Naive thymus-derived CD4-positive, alpha-beta T cell (primary cell): ENCODE measurements at regions of chr7 and their contacts with region 1.

Region 1: DNA sequence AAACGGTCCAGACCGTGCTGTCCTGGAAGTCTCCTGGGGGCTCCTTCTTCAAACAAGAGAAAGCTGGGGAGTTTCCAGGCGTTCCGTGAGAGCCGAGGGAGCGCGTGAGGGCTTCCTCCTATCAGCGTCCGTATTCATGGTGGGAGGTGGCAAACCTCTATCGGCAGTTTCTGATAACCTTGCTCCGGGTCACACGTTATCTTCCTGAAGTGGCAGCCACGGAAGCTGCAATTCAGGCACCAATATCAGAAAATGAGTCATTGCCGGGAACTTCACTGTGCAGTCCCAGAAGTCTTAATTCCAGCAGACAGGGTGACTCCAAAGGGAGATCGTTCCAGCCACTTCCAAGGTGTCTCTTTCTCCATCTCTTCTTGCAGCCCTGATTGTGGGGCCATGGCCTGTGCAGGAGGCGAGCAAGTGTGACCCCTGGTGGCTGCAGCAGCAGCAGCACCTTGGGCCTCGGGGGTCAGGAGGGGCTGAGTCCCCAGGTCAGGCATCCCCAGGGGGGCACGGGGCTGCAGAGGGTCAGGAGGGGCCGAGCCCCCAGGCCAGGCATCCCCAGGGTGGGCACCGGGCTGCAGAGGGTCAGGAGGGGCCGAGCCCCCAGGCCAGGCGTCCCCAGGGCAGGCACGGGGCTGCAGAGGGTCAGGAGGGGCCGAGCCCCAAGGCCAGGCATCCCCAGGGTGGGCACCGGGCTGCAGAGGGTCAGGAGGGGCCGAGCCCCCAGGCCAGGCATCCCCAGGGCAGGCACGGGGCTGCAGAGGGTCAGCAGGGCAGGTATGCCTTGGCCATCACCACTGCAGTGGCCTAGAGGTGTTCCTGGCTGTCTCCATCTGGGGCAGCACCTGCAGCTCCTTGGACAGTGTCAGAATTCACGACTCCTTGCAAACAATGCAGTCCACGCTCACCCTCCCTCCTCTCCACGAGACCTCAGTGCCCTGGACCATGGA is 538.7 kb downstream of the DNAJB6 start:
- DNase-seq: peak; percentile 43 to 76 (median 72)
- ATAC-seq: peak; percentile 87
- H3K4me3 ChIP-seq: peak overlapping the region; percentile 33
- H3K4me3 Mint-ChIP-seq: peak overlapping the region; percentile 69 to 92 (median 81)
- H3K27ac ChIP-seq: peak overlapping the region; percentile 49
- H3K27ac Mint-ChIP-seq: peak overlapping the region; percentile 20 to 91 (median 73)
- H3K4me1 ChIP-seq: peaks cover 0 to 34% of the 10 kb centered on the region in 2 donors
- H3K4me1 Mint-ChIP-seq: peaks cover 14 to 47% (median 41%) of the 10 kb centered on the region in 7 donors
- H3K27me3 ChIP-seq: no peaks in the 10 kb centered on the region
- H3K27me3 Mint-ChIP-seq: peaks cover 0 to 3% (median 0%) of the 10 kb centered on the region in 5 donors

Region 2: DNA sequence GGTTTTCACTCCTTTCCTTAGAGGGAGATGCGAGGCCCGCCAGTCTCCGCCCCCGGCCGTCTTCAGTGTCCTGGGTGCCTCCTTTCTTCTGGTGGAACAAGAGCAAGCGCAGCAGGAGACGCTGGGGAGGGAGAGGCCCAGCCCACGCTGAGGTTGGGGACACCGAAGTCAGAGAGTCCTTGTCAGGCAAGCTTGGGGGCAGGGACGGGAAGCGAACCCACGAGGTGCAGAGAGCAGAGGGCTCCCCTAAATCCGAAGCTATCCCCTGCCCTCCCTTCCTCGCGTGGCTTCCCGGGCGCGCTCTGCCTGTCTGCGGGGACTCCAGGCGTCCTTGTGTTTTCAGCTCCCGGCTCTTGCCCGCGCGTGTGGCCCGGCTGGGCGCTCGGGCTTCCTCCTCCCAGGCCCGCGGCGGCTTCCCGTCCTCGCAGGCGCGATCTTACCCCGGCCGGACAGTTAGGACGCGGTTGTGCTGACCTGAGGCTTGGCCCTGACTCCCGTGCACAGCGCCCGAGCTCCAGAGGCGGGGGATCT is 797.4 kb before region 1 on chr7:
- CTCF ChIA-PET with region 1: no interaction called
- POLR2A ChIA-PET with region 1: no interaction called
- intact Hi-C with region 1: no loop called
- DNase-seq: no peak
- ATAC-seq: no peak
- H3K4me3 ChIP-seq: no peak overlapping the region
- H3K4me3 Mint-ChIP-seq: no peak overlapping the region
- H3K27ac ChIP-seq: no peak overlapping the region
- H3K27ac Mint-ChIP-seq: no peak overlapping the region
- H3K4me1 ChIP-seq: no peaks in the 10 kb centered on the region
- H3K4me1 Mint-ChIP-seq: peaks cover 0 to 7% (median 0%) of the 10 kb centered on the region in 7 donors
- H3K27me3 ChIP-seq: no peaks in the 10 kb centered on the region
- H3K27me3 Mint-ChIP-seq: peaks cover 35 to 69% (median 53%) of the 10 kb centered on the region in 5 donors

Region 3: DNA sequence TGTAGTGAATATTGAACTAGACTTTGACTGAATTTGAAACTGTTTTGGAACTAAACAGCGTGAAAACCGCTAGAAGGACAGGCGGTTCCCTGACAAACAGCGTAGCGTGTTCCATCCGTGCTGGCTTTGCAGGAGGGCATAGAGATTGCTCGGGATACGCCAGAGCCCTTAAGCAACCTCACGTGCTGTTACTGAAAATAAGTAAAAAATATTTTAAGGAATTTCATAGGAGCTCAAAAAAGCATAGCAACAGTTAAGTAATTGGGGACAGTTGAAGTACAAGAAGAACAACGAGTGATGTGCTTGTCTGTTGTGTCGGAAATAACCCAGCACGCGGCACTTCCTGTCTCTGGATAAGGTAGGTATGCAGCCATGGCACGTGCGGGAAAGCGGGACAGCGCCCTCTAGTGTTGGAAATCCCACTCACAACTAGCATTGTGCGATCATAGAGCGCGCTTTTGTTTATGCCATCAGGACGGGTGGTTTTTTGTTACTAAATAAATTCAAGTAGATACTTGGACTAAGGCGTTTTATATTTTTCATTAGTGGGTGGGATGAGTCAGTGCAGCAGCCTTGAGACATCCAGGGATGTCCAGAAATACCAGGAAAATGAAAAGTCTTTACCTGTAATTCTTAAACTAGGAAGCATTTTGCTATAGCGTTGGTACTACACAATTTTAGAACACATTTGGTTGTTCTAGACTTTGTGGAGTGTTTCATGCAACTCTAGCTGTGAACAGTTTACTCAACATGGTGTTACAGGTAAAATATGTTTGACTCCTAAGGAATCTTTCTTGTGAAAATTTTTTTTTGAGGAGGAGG is 488.3 kb before region 1 on chr7:
- CTCF ChIA-PET with region 1: interaction called, 6 read pairs
- POLR2A ChIA-PET with region 1: no interaction called
- intact Hi-C with region 1: loop called in 1 of 2 experiments (anchors 2 kb)
- DNase-seq: peak; percentile 67 to 90 (median 87)
- ATAC-seq: peak; percentile 96
- H3K4me3 ChIP-seq: no peak overlapping the region
- H3K4me3 Mint-ChIP-seq: peak overlapping the region in 7 of 10 donors; percentile 5 to 56 (median 21)
- H3K27ac ChIP-seq: peak overlapping the region; percentile 64
- H3K27ac Mint-ChIP-seq: peak overlapping the region; percentile 48 to 87 (median 72)
- H3K4me1 ChIP-seq: peaks cover 17 to 20% of the 10 kb centered on the region in 2 donors
- H3K4me1 Mint-ChIP-seq: peaks cover 26 to 52% (median 39%) of the 10 kb centered on the region in 7 donors
- H3K27me3 ChIP-seq: no peaks in the 10 kb centered on the region
- H3K27me3 Mint-ChIP-seq: no peaks in the 10 kb centered on the region

Region 4: DNA sequence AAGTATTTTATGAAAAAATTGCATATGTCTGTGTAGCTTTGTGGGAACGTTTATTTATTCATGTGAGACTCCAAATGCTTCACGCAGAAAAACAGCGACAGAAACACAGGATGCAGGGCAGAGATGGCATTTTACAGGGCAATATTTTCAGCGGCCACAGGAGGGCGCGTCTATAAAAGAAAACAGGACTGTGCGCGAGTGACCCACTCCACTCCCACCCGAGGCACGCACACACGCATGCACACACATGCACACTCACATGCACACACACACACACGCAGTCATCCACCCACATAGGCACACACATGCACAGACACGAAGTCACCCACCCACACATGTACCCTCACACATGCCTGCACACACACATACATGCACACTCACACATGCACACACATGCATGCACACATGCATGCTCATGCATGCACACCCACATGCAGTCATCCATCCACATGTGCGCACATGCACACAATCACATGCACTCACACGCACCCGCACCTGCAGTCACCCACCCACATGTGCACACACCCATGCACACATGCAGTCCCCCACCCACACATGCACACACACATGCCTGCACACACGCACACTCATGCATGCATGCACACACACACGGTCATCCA is 442.4 kb before region 1 on chr7:
- CTCF ChIA-PET with region 1: interaction called, 7 read pairs
- POLR2A ChIA-PET with region 1: no interaction called
- intact Hi-C with region 1: loop called (anchors 1 kb)
- DNase-seq: peak; percentile 36 to 72 (median 61)
- ATAC-seq: peak; percentile 78
- H3K4me3 ChIP-seq: peak overlapping the region; percentile 22
- H3K4me3 Mint-ChIP-seq: peak overlapping the region; percentile 7 to 79 (median 59)
- H3K27ac ChIP-seq: no peak overlapping the region
- H3K27ac Mint-ChIP-seq: peak overlapping the region in 5 of 9 donors; percentile 10 to 58 (median 48)
- H3K4me1 ChIP-seq: peaks cover 0 to 12% of the 10 kb centered on the region in 2 donors
- H3K4me1 Mint-ChIP-seq: peaks cover 11 to 22% (median 16%) of the 10 kb centered on the region in 7 donors
- H3K27me3 ChIP-seq: no peaks in the 10 kb centered on the region
- H3K27me3 Mint-ChIP-seq: peaks cover 0 to 9% (median 0%) of the 10 kb centered on the region in 5 donors

Region 5: GRCh38 chr7:157612664-157613561 is 262.6 kb before region 1 on chr7:
- CTCF ChIA-PET with region 1: no interaction called
- POLR2A ChIA-PET with region 1: interaction called, 8 read pairs
- intact Hi-C with region 1: loop called in 1 of 2 experiments (anchors 1 kb)
- DNase-seq: peak; percentile 50 to 86 (median 79)
- ATAC-seq: peak; percentile 88
- H3K4me3 ChIP-seq: peak overlapping the region; percentile 79
- H3K4me3 Mint-ChIP-seq: peak overlapping the region; percentile 76 to 93 (median 86)
- H3K27ac ChIP-seq: peak overlapping the region; percentile 63
- H3K27ac Mint-ChIP-seq: peak overlapping the region; percentile 80 to 97 (median 88)
- H3K4me1 ChIP-seq: peaks cover 0 to 8% of the 10 kb centered on the region in 2 donors
- H3K4me1 Mint-ChIP-seq: peaks cover 8 to 37% (median 23%) of the 10 kb centered on the region in 7 donors
- H3K27me3 ChIP-seq: no peaks in the 10 kb centered on the region
- H3K27me3 Mint-ChIP-seq: peaks cover 0 to 4% (median 0%) of the 10 kb centered on the region in 5 donors

Region 6: GRCh38 chr7:157690833-157691585 is 184.5 kb before region 1 on chr7:
- CTCF ChIA-PET with region 1: no interaction called
- POLR2A ChIA-PET with region 1: no interaction called
- intact Hi-C with region 1: loop called in 1 of 2 experiments (anchors 5 kb)
- DNase-seq: peak in 1 of 9 donors; percentile 6
- ATAC-seq: peak; percentile 40
- H3K4me3 ChIP-seq: no peak overlapping the region
- H3K4me3 Mint-ChIP-seq: peak overlapping the region; percentile 58 to 84 (median 79)
- H3K27ac ChIP-seq: no peak overlapping the region
- H3K27ac Mint-ChIP-seq: peak overlapping the region in 2 of 9 donors; percentile 14 to 33
- H3K4me1 ChIP-seq: peaks cover 0 to 26% of the 10 kb centered on the region in 2 donors
- H3K4me1 Mint-ChIP-seq: peaks cover 2 to 47% (median 38%) of the 10 kb centered on the region in 7 donors
- H3K27me3 ChIP-seq: peaks cover 12 to 31% of the 10 kb centered on the region in 2 donors
- H3K27me3 Mint-ChIP-seq: peaks cover 36 to 68% (median 54%) of the 10 kb centered on the region in 5 donors

Region 7: GRCh38 chr7:157793087-157793353 is 82.5 kb before region 1 on chr7:
- CTCF ChIA-PET with region 1: no interaction called
- POLR2A ChIA-PET with region 1: no interaction called
- intact Hi-C with region 1: loop called in 1 of 2 experiments (anchors 5 kb)
- DNase-seq: no peak
- ATAC-seq: no peak
- H3K4me3 ChIP-seq: no peak overlapping the region
- H3K4me3 Mint-ChIP-seq: no peak overlapping the region
- H3K27ac ChIP-seq: no peak overlapping the region
- H3K27ac Mint-ChIP-seq: no peak overlapping the region
- H3K4me1 ChIP-seq: no peaks in the 10 kb centered on the region
- H3K4me1 Mint-ChIP-seq: peaks cover 0 to 6% (median 3%) of the 10 kb centered on the region in 7 donors
- H3K27me3 ChIP-seq: no peaks in the 10 kb centered on the region
- H3K27me3 Mint-ChIP-seq: no peaks in the 10 kb centered on the region

Region 8: GRCh38 chr7:157851501-157852067 is 23.9 kb before region 1 on chr7:
- CTCF ChIA-PET with region 1: no interaction called
- POLR2A ChIA-PET with region 1: interaction called, 25 read pairs
- intact Hi-C with region 1: loop called (anchors 1 kb)
- DNase-seq: peak; percentile 57 to 90 (median 82)
- ATAC-seq: peak; percentile 86
- H3K4me3 ChIP-seq: peak overlapping the region; percentile 46
- H3K4me3 Mint-ChIP-seq: peak overlapping the region; percentile 67 to 86 (median 84)
- H3K27ac ChIP-seq: peak overlapping the region; percentile 68
- H3K27ac Mint-ChIP-seq: peak overlapping the region; percentile 89 to 100 (median 97)
- H3K4me1 ChIP-seq: peaks cover 0 to 20% of the 10 kb centered on the region in 2 donors
- H3K4me1 Mint-ChIP-seq: peaks cover 5 to 30% (median 18%) of the 10 kb centered on the region in 7 donors
- H3K27me3 ChIP-seq: no peaks in the 10 kb centered on the region
- H3K27me3 Mint-ChIP-seq: no peaks in the 10 kb centered on the region